ENCODE measurements at regions of chr17 and their contacts with region 1.

Region 1: DNA sequence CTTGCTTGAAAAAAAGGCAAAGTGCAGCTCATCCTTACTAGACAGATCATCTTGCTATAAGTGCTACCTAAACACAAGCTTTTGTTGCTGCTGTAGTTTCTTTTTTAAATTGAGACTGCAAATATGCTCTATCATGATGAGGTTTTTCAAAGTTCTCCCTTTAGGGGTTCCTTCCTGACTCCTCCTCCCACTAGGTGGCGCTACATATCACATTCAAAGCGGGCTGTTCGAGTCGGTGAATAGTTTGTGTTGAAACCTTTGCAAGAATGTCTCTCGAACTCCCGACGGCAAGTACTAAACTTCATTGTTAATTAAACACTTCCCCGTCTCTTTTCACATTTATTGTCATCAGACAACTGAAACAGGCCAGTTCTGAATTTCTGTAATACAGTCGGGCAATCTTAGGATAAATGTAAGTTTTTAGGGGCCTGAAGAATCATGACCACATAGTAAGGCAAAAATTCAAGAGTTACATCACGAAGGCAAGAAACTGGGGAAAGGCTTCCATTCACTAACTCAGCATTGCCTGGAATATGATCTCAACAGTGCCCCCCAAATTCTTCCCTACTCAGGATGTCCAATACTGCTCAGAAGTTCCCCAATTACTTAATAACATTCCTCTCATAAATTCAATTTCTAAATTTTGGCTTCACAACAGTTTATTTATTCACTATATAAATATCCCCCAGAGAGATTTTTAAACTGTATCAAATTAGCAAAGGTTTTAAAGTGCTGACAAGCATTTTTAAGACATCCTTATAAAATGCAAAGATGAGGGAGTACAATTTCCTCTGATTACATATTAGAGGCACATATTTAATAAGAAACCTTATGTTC is 6.7 kb downstream of the HS3ST3A1 start:
- DNase-seq: peak; percentile 44 to 85 (median 80)
- ATAC-seq: peak; percentile 91
- H3K4me3 ChIP-seq: no peak overlapping the region
- H3K4me3 Mint-ChIP-seq: no peak overlapping the region
- H3K27ac ChIP-seq: no peak overlapping the region
- H3K27ac Mint-ChIP-seq: peak overlapping the region in 1 of 9 donors; percentile 3
- H3K4me1 ChIP-seq: no peaks in the 10 kb centered on the region
- H3K4me1 Mint-ChIP-seq: peaks cover 1 to 8% (median 7%) of the 10 kb centered on the region in 7 donors
- H3K27me3 ChIP-seq: no peaks in the 10 kb centered on the region
- H3K27me3 Mint-ChIP-seq: peaks cover 29 to 39% (median 36%) of the 10 kb centered on the region in 5 donors

Region 2: GRCh38 chr17:13323990-13324389 is 271.0 kb before region 1 on chr17:
- CTCF ChIA-PET with region 1: no interaction called
- POLR2A ChIA-PET with region 1: no interaction called
- intact Hi-C with region 1: no loop called
- DNase-seq: no peak
- ATAC-seq: no peak
- H3K4me3 ChIP-seq: no peak overlapping the region
- H3K4me3 Mint-ChIP-seq: no peak overlapping the region
- H3K27ac ChIP-seq: no peak overlapping the region
- H3K27ac Mint-ChIP-seq: no peak overlapping the region
- H3K4me1 ChIP-seq: no peaks in the 10 kb centered on the region
- H3K4me1 Mint-ChIP-seq: no peaks in the 10 kb centered on the region
- H3K27me3 ChIP-seq: no peaks in the 10 kb centered on the region
- H3K27me3 Mint-ChIP-seq: peaks cover 0 to 21% (median 11%) of the 10 kb centered on the region in 5 donors

Region 3: DNA sequence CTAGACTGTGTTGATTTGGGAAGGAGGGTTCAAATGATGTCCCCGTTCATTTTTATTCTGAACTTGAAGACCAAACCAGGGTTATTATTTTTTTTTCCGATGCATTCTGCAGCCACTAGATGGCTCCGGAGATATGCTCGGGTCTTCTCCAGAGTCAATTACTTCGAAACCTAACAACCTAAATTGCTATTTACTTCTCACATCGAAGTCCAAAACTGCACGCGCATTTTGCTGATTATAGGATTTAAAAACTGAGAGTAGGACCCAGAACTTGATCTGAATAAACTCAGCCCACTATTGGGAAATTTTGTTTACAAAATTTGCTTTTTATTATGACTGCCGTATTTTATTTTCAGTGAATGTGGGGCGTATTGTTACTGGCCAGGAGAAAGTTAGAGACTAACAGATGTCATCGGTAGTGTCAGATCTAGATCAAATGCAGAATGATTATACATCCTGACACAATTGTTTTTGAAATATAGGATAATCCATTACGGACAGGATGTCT is 257.1 kb before region 1 on chr17:
- CTCF ChIA-PET with region 1: no interaction called
- POLR2A ChIA-PET with region 1: no interaction called
- intact Hi-C with region 1: loop called (anchors 5 kb)
- DNase-seq: peak in 5 of 9 donors; percentile 4 to 22 (median 16)
- ATAC-seq: no peak
- H3K4me3 ChIP-seq: no peak overlapping the region
- H3K4me3 Mint-ChIP-seq: peak overlapping the region in 7 of 10 donors; percentile 28 to 63 (median 51)
- H3K27ac ChIP-seq: no peak overlapping the region
- H3K27ac Mint-ChIP-seq: no peak overlapping the region
- H3K4me1 ChIP-seq: no peaks in the 10 kb centered on the region
- H3K4me1 Mint-ChIP-seq: peaks cover 0 to 7% (median 3%) of the 10 kb centered on the region in 7 donors
- H3K27me3 ChIP-seq: peaks cover 0 to 5% of the 10 kb centered on the region in 2 donors
- H3K27me3 Mint-ChIP-seq: peaks cover 9 to 54% (median 30%) of the 10 kb centered on the region in 5 donors

Region 4: DNA sequence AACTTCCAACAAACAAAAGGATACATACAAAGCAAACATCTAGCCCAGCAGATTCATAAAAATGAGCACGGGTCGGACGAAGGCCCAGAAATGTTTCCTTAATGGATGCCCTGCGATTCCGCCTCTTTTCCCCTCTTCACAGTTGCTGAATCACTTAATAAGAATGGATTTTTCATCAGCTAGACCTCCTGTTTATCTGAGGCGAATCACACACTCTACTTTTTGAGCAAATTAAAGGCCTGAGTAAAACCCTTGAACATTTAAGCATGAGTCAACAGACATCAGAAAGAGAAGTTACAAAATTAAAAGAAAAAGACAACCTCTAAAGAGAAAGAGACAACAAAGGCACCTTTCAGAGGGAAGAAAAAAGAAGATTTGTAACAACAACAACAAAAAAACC is 37.9 kb before region 1 on chr17:
- CTCF ChIA-PET with region 1: no interaction called
- POLR2A ChIA-PET with region 1: no interaction called
- intact Hi-C with region 1: no loop called
- DNase-seq: no peak
- ATAC-seq: no peak
- H3K4me3 ChIP-seq: no peak overlapping the region
- H3K4me3 Mint-ChIP-seq: no peak overlapping the region
- H3K27ac ChIP-seq: no peak overlapping the region
- H3K27ac Mint-ChIP-seq: no peak overlapping the region
- H3K4me1 ChIP-seq: no peaks in the 10 kb centered on the region
- H3K4me1 Mint-ChIP-seq: no peaks in the 10 kb centered on the region
- H3K27me3 ChIP-seq: no peaks in the 10 kb centered on the region
- H3K27me3 Mint-ChIP-seq: peaks cover 0 to 10% (median 6%) of the 10 kb centered on the region in 5 donors

Region 5: DNA sequence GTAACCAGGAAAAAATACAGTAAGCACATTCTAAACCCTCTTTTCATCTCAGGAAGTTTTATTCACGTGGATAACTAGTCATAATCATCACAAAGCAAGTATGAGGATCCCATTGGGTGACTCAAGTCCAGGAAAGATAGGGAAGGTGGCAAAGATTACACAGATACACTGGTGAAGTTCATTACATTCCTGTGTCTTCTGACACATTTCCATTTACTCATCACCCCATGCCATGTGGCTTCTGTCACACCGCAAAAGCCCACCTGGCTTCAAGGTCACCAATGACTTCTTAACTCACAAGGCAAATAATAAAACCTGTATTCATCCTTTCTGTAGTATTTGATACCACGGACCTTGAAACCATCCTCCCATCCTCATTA is 10.3 kb before region 1 on chr17:
- CTCF ChIA-PET with region 1: no interaction called
- POLR2A ChIA-PET with region 1: no interaction called
- intact Hi-C with region 1: no loop called
- DNase-seq: no peak
- ATAC-seq: no peak
- H3K4me3 ChIP-seq: no peak overlapping the region
- H3K4me3 Mint-ChIP-seq: no peak overlapping the region
- H3K27ac ChIP-seq: no peak overlapping the region
- H3K27ac Mint-ChIP-seq: no peak overlapping the region
- H3K4me1 ChIP-seq: no peaks in the 10 kb centered on the region
- H3K4me1 Mint-ChIP-seq: no peaks in the 10 kb centered on the region
- H3K27me3 ChIP-seq: no peaks in the 10 kb centered on the region
- H3K27me3 Mint-ChIP-seq: peaks cover 4 to 15% (median 6%) of the 10 kb centered on the region in 5 donors

Region 6: GRCh38 chr17:14427900-14428647 is 833.1 kb after region 1 on chr17:
- CTCF ChIA-PET with region 1: no interaction called
- POLR2A ChIA-PET with region 1: no interaction called
- intact Hi-C with region 1: loop called in 1 of 2 experiments (anchors 10 kb)
- DNase-seq: peak in 8 of 9 donors; percentile 33 to 76 (median 70)
- ATAC-seq: peak; percentile 99
- H3K4me3 ChIP-seq: peak overlapping the region; percentile 57
- H3K4me3 Mint-ChIP-seq: peak overlapping the region; percentile 76 to 96 (median 84)
- H3K27ac ChIP-seq: peak overlapping the region; percentile 73
- H3K27ac Mint-ChIP-seq: peak overlapping the region; percentile 68 to 97 (median 95)
- H3K4me1 ChIP-seq: peaks cover 30 to 39% of the 10 kb centered on the region in 2 donors
- H3K4me1 Mint-ChIP-seq: peaks cover 34 to 68% (median 61%) of the 10 kb centered on the region in 7 donors
- H3K27me3 ChIP-seq: no peaks in the 10 kb centered on the region
- H3K27me3 Mint-ChIP-seq: no peaks in the 10 kb centered on the region

Region 7: GRCh38 chr17:14784997-14785696 is 1190.2 kb after region 1 on chr17:
- CTCF ChIA-PET with region 1: interaction called, 12 read pairs
- POLR2A ChIA-PET with region 1: no interaction called
- intact Hi-C with region 1: loop called in 1 of 2 experiments (anchors 1 kb)
- DNase-seq: peak in 8 of 9 donors; percentile 12 to 58 (median 40)
- ATAC-seq: peak; percentile 51
- H3K4me3 ChIP-seq: no peak overlapping the region
- H3K4me3 Mint-ChIP-seq: no peak overlapping the region
- H3K27ac ChIP-seq: no peak overlapping the region
- H3K27ac Mint-ChIP-seq: no peak overlapping the region
- H3K4me1 ChIP-seq: no peaks in the 10 kb centered on the region
- H3K4me1 Mint-ChIP-seq: no peaks in the 10 kb centered on the region
- H3K27me3 ChIP-seq: no peaks in the 10 kb centered on the region
- H3K27me3 Mint-ChIP-seq: peaks cover 0 to 18% (median 13%) of the 10 kb centered on the region in 5 donors

Region 8: GRCh38 chr17:14926526-14927122 is 1331.6 kb after region 1 on chr17:
- CTCF ChIA-PET with region 1: interaction called, 14 read pairs
- POLR2A ChIA-PET with region 1: no interaction called
- intact Hi-C with region 1: loop called (anchors 1 kb)
- DNase-seq: peak; percentile 7 to 66 (median 44)
- ATAC-seq: peak; percentile 61
- H3K4me3 ChIP-seq: no peak overlapping the region
- H3K4me3 Mint-ChIP-seq: no peak overlapping the region
- H3K27ac ChIP-seq: no peak overlapping the region
- H3K27ac Mint-ChIP-seq: no peak overlapping the region
- H3K4me1 ChIP-seq: no peaks in the 10 kb centered on the region
- H3K4me1 Mint-ChIP-seq: no peaks in the 10 kb centered on the region
- H3K27me3 ChIP-seq: no peaks in the 10 kb centered on the region
- H3K27me3 Mint-ChIP-seq: peaks cover 0 to 23% (median 15%) of the 10 kb centered on the region in 5 donors